Activated CD8-positive, alpha-beta T cell treated with anti-CD3 and anti-CD28 coated beads for 36 hours (primary cell): ENCODE measurements at regions of chr2 and their contacts with region 1.

Region 1: GRCh38 chr2:84881581-84882414 is 914 bp upstream of the TRABD2A start:
- DNase-seq: peak; percentile 95
- ATAC-seq: peak; percentile 73
- H3K4me3 Mint-ChIP-seq: peak overlapping the region; percentile 96
- H3K27ac Mint-ChIP-seq: peak overlapping the region; percentile 94
- H3K4me1 Mint-ChIP-seq: peaks cover 56% of the 10 kb centered on the region
- H3K27me3 Mint-ChIP-seq: no peaks in the 10 kb centered on the region
- CTCF ChIP-seq: peak; percentile 72

Region 2: DNA sequence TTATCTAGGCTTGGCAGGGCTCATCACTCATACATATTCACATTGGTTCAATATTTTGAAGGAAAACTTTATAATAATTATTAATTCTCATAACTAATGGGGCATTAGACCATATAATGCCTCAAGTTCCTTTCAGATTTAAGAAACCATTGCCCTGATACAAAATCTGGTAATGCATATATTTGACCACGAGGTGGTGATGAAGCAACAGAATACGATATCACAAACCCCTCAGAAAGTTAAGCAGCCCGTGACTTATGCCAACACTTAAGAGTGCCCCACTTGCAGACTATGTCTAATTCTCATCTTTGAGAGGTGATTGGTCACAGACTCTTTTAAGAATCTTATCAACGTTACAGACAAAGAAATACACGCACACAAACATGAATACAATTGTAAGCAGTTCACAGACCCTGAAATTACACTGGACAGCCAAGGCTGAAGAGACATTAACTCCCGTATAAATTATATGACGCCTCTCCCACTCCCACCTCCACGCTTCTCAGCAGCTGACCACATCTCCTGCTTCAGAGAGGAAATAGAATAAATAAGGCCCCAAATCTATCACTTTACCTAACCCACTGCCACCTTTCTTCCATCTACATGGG is 386.2 kb before region 1 on chr2:
- CTCF ChIA-PET with region 1: interaction called, 10 read pairs
- POLR2A ChIA-PET with region 1: no interaction called
- intact Hi-C with region 1: loop called (anchors 2 kb)
- DNase-seq: peak; percentile 37
- ATAC-seq: peak; percentile 99
- H3K4me3 Mint-ChIP-seq: no peak overlapping the region
- H3K27ac Mint-ChIP-seq: no peak overlapping the region
- H3K4me1 Mint-ChIP-seq: peaks cover 15% of the 10 kb centered on the region
- H3K27me3 Mint-ChIP-seq: no peaks in the 10 kb centered on the region
- CTCF ChIP-seq: peak; percentile 74

Region 3: GRCh38 chr2:84631047-84631446 is 250.8 kb before region 1 on chr2:
- CTCF ChIA-PET with region 1: interaction called, 13 read pairs
- POLR2A ChIA-PET with region 1: interaction called, 3 read pairs
- intact Hi-C with region 1: no loop called
- DNase-seq: no peak
- ATAC-seq: peak; percentile 88
- H3K4me3 Mint-ChIP-seq: no peak overlapping the region
- H3K27ac Mint-ChIP-seq: no peak overlapping the region
- H3K4me1 Mint-ChIP-seq: peaks cover 25% of the 10 kb centered on the region
- H3K27me3 Mint-ChIP-seq: no peaks in the 10 kb centered on the region
- CTCF ChIP-seq: peak; percentile 70

Region 4: GRCh38 chr2:84716564-84716963 is 165.2 kb before region 1 on chr2:
- CTCF ChIA-PET with region 1: no interaction called
- POLR2A ChIA-PET with region 1: no interaction called
- intact Hi-C with region 1: no loop called
- DNase-seq: no peak
- ATAC-seq: no peak
- H3K4me3 Mint-ChIP-seq: no peak overlapping the region
- H3K27ac Mint-ChIP-seq: no peak overlapping the region
- H3K4me1 Mint-ChIP-seq: peaks cover 18% of the 10 kb centered on the region
- H3K27me3 Mint-ChIP-seq: no peaks in the 10 kb centered on the region
- CTCF ChIP-seq: no peak

Region 5: DNA sequence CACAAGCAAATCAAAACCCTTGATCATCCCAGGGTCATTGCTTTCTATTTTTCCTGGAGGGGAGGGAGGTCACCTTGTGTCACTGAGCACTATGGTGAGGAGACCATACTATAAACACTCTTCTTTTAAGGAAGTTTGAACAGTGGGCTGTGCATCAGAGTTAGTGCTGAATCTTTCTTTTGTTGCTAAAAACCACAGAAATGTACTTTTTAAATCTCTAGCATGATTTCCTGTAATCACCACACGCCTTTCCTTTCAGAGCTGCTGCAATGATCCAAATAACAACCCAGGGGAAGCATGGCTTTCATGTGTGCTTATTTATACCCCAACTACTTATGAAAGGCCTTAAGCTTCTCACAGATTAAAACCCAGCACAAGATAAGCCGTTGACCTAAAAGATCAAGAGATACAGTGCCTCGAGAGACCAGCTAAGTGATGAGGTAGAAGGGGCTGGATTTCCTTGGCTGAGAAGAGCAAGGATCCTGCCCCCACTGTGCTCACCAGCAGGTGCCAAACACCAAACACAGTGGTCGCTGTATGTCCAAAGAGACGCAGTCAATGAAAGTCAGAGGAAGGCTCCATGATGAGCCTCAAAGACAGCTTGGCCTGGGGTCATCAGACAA is 35.6 kb before region 1 on chr2:
- CTCF ChIA-PET with region 1: interaction called, 11 read pairs
- POLR2A ChIA-PET with region 1: interaction called, 14 read pairs
- intact Hi-C with region 1: loop called (anchors 5 kb)
- DNase-seq: peak; percentile 57
- ATAC-seq: peak; percentile 51
- H3K4me3 Mint-ChIP-seq: peak overlapping the region; percentile 48
- H3K27ac Mint-ChIP-seq: peak overlapping the region; percentile 97
- H3K4me1 Mint-ChIP-seq: peaks cover 89% of the 10 kb centered on the region
- H3K27me3 Mint-ChIP-seq: no peaks in the 10 kb centered on the region
- CTCF ChIP-seq: no peak

Region 6: GRCh38 chr2:84870306-84870705 is 11.5 kb before region 1 on chr2:
- CTCF ChIA-PET with region 1: interaction called, 17 read pairs
- POLR2A ChIA-PET with region 1: interaction called, 9 read pairs
- intact Hi-C with region 1: no loop called
- DNase-seq: no peak
- ATAC-seq: no peak
- H3K4me3 Mint-ChIP-seq: no peak overlapping the region
- H3K27ac Mint-ChIP-seq: peak overlapping the region; percentile 37
- H3K4me1 Mint-ChIP-seq: peaks cover 77% of the 10 kb centered on the region
- H3K27me3 Mint-ChIP-seq: no peaks in the 10 kb centered on the region
- CTCF ChIP-seq: no peak

Region 7: DNA sequence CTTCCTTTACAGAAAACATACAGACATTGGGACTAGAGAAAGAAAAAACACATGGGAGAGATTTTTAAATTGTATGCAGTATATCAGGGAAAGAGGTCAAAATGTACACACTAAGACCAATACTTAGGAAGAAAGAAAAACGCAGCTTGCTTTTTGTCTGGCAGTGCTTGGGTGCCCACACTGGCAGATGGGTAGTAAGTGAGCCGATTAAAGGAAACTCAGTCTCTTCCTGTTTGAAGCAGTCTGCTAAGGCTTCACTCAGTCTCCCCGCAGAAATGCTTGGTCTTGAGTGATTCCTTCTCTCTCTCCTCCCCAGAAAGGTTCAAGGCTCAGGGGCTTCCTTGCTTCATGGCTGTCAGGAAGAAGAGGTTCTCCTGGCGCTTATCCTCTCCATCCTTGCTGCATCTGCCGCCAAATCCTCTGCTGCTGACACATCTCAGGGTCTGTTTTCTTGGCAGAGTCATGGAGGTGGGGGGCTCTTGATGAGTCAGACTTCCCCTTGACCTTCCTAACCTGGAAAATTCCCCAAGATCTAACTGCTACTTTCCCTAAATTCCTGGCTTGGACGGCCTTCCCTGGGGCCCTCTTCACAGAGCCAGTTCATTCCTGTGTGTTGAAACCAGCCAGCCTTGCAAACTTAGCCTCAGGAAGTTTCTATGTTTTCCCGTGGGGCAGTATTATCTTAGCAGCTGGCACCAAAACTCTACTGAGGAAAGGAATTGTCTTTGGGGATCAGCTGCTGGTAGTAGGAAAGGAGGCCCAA is 13.1 kb after region 1 on chr2:
- CTCF ChIA-PET with region 1: interaction called, 11 read pairs
- POLR2A ChIA-PET with region 1: interaction called, 9 read pairs
- intact Hi-C with region 1: no loop called
- DNase-seq: peak; percentile 40
- ATAC-seq: peak; percentile 22
- H3K4me3 Mint-ChIP-seq: peak overlapping the region; percentile 27
- H3K27ac Mint-ChIP-seq: peak overlapping the region; percentile 77
- H3K4me1 Mint-ChIP-seq: peaks cover 57% of the 10 kb centered on the region
- H3K27me3 Mint-ChIP-seq: no peaks in the 10 kb centered on the region
- CTCF ChIP-seq: no peak

Region 8: DNA sequence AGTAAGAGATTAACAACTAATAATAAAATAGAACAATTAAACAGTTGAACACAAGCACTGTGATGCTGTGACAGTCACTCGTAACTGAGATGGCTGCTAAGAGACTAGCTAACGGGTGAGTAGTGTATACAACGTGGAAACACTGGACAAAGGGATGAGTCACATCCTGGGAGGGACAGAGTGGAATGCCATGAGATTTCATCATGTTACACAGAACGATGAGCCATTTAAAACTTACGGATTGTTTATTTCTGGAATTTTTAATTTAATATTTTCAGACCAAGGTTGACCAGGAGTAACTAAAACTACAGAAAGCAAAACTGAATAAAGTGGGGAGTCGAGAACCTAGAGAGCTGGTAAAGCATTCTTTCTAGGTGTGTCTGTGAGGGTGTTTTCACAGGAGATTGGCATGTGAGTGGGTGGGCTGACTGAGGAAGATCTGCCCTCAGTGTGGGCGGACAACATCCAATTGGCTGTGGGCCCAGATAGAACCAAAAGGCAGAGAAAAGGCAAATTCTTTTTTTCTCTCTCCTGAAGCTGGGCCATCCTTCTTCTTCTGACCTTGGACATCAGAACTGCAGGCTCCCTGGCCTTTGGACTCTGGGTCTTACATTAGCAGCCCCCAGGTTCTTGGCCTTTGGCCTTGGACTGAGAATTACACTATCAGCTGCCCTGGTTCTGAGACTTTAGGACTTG is 38.2 kb after region 1 on chr2:
- CTCF ChIA-PET with region 1: interaction called, 84 read pairs
- POLR2A ChIA-PET with region 1: interaction called, 25 read pairs
- intact Hi-C with region 1: loop called (anchors 2 kb)
- DNase-seq: peak; percentile 85
- ATAC-seq: peak; percentile 82
- H3K4me3 Mint-ChIP-seq: peak overlapping the region; percentile 69
- H3K27ac Mint-ChIP-seq: peak overlapping the region; percentile 96
- H3K4me1 Mint-ChIP-seq: peaks cover 50% of the 10 kb centered on the region
- H3K27me3 Mint-ChIP-seq: no peaks in the 10 kb centered on the region
- CTCF ChIP-seq: no peak

Region 9: DNA sequence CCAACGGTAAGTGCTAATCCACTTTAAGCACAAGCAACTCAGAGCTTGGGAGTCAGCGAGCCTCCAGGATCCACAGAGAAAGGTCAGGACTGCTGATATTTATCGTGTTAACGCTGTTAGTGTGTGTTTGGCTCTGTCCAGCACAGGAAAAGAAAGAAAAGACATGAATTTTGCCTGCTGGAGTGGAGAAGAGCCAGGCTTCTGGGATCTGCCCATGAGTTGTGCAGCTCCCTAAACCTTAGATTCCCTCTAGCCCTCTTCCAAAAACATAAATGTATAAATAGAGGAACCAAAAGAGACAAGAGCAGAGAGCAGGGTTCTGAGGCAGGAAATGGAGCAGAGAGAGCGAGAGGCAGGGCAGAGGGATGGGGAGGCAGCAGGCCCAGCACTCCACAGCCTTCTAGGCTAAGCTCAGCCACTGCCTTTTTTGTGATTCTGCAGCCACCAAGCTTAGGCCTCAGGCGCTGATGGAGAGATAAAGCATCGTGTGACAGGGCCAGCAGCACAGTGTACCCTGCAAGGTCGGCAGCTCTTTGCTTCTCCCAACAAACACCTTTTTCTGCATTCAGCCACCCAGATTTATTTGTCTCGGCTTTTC is 642.6 kb after region 1 on chr2:
- CTCF ChIA-PET with region 1: no interaction called
- POLR2A ChIA-PET with region 1: no interaction called
- intact Hi-C with region 1: no loop called
- DNase-seq: no peak
- ATAC-seq: no peak
- H3K4me3 Mint-ChIP-seq: no peak overlapping the region
- H3K27ac Mint-ChIP-seq: no peak overlapping the region
- H3K4me1 Mint-ChIP-seq: no peaks in the 10 kb centered on the region
- H3K27me3 Mint-ChIP-seq: peaks cover 7% of the 10 kb centered on the region
- CTCF ChIP-seq: no peak